ENCODE measurements at regions of chr11 and their contacts with region 1.

Region 1: DNA sequence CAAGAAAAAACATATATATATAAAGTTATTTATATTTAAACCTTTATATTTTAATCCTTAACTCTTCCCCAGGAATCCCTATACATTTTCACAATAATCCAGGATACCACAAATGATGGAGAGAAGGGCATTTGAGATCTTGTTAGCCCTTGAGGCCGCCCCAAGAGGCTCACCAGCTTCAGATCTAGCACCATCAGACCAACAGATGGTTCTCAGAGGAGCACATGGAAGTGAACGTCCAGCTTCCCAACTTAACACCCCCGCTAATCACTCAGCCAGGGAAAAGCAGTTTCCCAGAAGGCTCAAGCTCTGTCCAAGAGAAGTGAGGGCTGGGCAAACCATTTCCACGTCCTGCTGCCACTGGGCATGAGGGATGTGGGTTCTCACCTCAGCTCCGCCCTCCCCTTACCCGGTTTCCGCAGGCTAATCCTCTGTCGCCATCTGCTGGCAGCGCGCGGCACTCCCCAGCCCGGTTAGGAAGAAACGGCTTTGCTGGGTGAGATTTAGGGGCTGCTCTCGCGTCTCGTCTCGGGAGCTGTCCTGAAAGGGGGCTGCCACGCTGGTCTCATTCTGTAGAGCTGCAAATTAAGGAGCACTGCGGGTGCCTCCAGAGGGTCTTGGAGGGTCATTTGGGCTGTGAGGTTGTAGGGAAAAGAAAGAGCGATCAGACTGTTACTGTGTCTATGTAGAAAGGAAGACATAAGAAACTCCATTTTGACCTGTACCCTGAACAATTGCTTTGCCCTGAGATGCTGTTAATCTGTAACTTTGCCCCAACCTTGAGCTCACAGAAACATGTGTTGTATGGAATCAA is 6.8 kb upstream of the FAM111A start:
- DNase-seq: peak; percentile 39
- H3K4me3 ChIP-seq: no peak overlapping the region
- H3K27ac ChIP-seq: no peak overlapping the region
- H3K27me3 ChIP-seq: no peaks in the 10 kb centered on the region
- CTCF ChIP-seq: peak; percentile 99

Region 2: DNA sequence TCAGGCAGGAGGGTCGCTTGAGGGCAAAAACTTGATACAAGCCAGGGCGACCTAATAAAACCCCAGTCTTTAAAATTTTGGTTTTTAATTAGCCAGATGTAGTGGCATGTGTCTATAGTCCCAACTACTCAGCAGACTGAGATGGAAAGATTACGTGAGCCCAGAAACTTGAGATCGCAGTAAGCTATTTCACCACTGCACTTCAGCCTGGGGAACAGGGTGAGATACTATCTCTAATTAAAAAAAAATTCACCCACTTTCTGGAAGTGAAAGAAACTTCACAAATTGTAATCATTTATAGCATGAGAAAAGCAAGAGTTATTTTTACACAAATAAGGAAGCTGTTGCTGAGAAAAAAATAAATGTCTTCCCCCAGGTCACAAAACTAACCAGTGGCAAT is 290.5 kb before region 1 on chr11:
- CTCF ChIA-PET with region 1: interaction called, 10 read pairs
- POLR2A ChIA-PET with region 1: no interaction called
- DNase-seq: no peak
- H3K4me3 ChIP-seq: no peak overlapping the region
- H3K27ac ChIP-seq: no peak overlapping the region
- H3K27me3 ChIP-seq: no peaks in the 10 kb centered on the region
- CTCF ChIP-seq: no peak

Region 3: GRCh38 chr11:58923300-58923788 is 212.5 kb before region 1 on chr11:
- CTCF ChIA-PET with region 1: interaction called, 10 read pairs
- POLR2A ChIA-PET with region 1: no interaction called
- DNase-seq: no peak
- H3K4me3 ChIP-seq: peak overlapping the region; percentile 18
- H3K27ac ChIP-seq: no peak overlapping the region
- H3K27me3 ChIP-seq: no peaks in the 10 kb centered on the region
- CTCF ChIP-seq: peak; percentile 51

Region 4: GRCh38 chr11:59076876-59077571 is 58.8 kb before region 1 on chr11:
- CTCF ChIA-PET with region 1: interaction called, 10 read pairs
- POLR2A ChIA-PET with region 1: no interaction called
- DNase-seq: no peak
- H3K4me3 ChIP-seq: no peak overlapping the region
- H3K27ac ChIP-seq: no peak overlapping the region
- H3K27me3 ChIP-seq: no peaks in the 10 kb centered on the region
- CTCF ChIP-seq: no peak

Region 5: GRCh38 chr11:59106363-59107336 is 29.2 kb before region 1 on chr11 and contains the start of gene FAM111B:
- CTCF ChIA-PET with region 1: interaction called, 68 read pairs
- POLR2A ChIA-PET with region 1: no interaction called
- DNase-seq: peak; percentile 60
- H3K4me3 ChIP-seq: peak within 1 kb of the TSS; percentile 69
- H3K27ac ChIP-seq: no peak within 1 kb of the TSS
- H3K27me3 ChIP-seq: peaks cover 2% of the 10 kb centered on the region
- CTCF ChIP-seq: peak; percentile 18; the same call in 1 of the 2 replicates
- polyA plus RNA-seq, gene FAM111B: 1.6 and 2.7 TPM in 2 replicates

Region 6: DNA sequence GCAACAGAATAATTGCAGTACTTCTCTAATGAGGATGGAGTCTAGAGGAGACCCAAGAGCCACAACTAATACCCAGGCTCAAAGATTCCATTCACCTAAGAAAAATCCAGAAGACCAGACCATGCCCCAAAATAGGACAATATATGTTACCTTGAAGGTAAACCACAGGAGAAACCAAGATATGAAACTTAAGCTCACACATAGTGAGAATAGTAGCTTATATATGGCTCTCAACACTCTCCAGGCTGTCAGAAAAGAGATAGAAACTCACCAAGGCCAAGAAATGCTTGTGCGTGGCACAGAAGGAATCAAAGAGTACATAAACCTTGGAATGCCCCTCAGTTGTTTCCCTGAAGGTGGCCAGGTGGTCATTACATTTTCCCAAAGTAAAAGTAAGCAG is 15.9 kb after region 1 on chr11:
- CTCF ChIA-PET with region 1: interaction called, 143 read pairs
- POLR2A ChIA-PET with region 1: no interaction called
- DNase-seq: no peak
- H3K4me3 ChIP-seq: no peak overlapping the region
- H3K27ac ChIP-seq: no peak overlapping the region
- H3K27me3 ChIP-seq: no peaks in the 10 kb centered on the region
- CTCF ChIP-seq: no peak

Region 7: GRCh38 chr11:59698506-59698905 is 562.7 kb after region 1 on chr11:
- CTCF ChIA-PET with region 1: no interaction called
- POLR2A ChIA-PET with region 1: no interaction called
- DNase-seq: no peak
- H3K4me3 ChIP-seq: no peak overlapping the region
- H3K27ac ChIP-seq: no peak overlapping the region
- H3K27me3 ChIP-seq: no peaks in the 10 kb centered on the region
- CTCF ChIP-seq: no peak

Measured in AG04450 (cell line).